B cell (primary cell): ENCODE measurements at regions of chr19 and their contacts with region 1.

Region 1: GRCh38 chr19:56080669-56081401 is 40.3 kb downstream of the ZNF787 start:
- DNase-seq: peak; percentile 88
- ATAC-seq: peak; percentile 78
- H3K4me3 ChIP-seq: peak overlapping the region; percentile 13 to 74 (median 45)
- H3K4me3 Mint-ChIP-seq: peak overlapping the region; percentile 95
- H3K27ac ChIP-seq: no peak overlapping the region
- H3K27ac Mint-ChIP-seq: peak overlapping the region; percentile 75
- H3K4me1 ChIP-seq: peaks cover 12 to 16% of the 10 kb centered on the region in 2 donors
- H3K4me1 Mint-ChIP-seq: peaks cover 12% of the 10 kb centered on the region
- H3K27me3 ChIP-seq: no peaks in the 10 kb centered on the region
- H3K27me3 Mint-ChIP-seq: no peaks in the 10 kb centered on the region
- CTCF ChIP-seq: peak; percentile 70

Region 2: DNA sequence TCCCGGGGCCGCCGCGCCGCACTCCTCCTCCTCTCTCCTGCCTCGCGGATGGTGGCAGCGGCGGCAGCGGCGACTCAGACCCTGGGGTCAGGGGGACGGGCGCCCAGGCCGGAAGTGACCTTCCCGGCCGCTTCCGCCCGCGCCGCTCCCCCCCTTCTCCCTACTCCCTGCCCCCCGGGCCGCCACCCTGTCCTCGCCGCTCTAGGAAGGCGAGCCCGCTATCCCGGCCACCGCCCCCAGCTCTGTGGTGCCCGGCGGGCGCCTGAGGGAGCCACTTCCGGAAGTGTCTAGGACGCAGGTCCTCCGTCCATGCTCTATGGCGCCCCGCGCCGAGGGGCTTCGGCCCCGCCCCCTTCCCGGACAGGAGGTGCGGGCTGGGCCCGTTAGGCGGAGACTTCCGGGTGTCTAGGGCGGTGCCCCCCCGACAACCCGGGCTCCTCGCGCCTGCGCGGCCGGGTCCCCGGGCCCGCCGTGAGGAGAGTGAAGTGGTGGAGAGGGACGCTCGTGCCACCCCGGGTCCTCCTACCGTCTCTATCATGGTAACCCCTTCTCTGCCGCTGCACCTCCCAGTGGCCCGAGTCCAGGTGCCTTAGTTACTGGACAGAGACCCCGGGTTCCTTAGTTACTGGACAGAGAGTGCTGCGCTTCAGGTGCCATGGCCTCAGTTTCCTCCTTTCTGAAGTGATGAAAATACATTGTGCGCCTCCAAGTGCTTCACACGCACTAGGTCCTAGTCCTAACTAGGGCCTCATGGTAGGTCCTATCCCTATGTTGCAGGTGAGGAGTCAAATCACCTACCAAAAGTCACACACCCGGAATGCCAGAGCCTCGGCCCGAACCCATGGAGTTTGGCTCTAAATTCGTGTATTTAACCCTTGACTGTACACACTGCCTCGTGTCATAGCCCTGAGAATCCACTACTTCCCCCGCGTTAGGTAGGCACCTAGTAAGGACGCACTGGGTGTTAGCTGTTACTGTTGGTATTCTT is 40.6 kb after region 1 on chr19 and contains the start of gene ZNF787:
- CTCF ChIA-PET with region 1: interaction called, 4 read pairs
- POLR2A ChIA-PET with region 1: no interaction called
- intact Hi-C with region 1: loop called (anchors 1 kb)
- DNase-seq: peak; percentile 98
- ATAC-seq: peak; percentile 83
- H3K4me3 ChIP-seq: peak within 1 kb of the TSS; percentile 37 to 95 (median 76)
- H3K4me3 Mint-ChIP-seq: peak within 1 kb of the TSS; percentile 94
- H3K27ac ChIP-seq: peak within 1 kb of the TSS; percentile 91 to 99
- H3K27ac Mint-ChIP-seq: peak within 1 kb of the TSS; percentile 99
- H3K4me1 ChIP-seq: peaks cover 18 to 29% of the 10 kb centered on the region in 2 donors
- H3K4me1 Mint-ChIP-seq: peaks cover 40% of the 10 kb centered on the region
- H3K27me3 ChIP-seq: no peaks in the 10 kb centered on the region
- H3K27me3 Mint-ChIP-seq: no peaks in the 10 kb centered on the region
- CTCF ChIP-seq: no peak
- total RNA-seq, gene ZNF787: 47.7 and 47.9 TPM in 2 replicates

Region 3: GRCh38 chr19:56252699-56253422 is 172.0 kb after region 1 on chr19:
- CTCF ChIA-PET with region 1: interaction called, 14 read pairs
- POLR2A ChIA-PET with region 1: no interaction called
- intact Hi-C with region 1: loop called (anchors 1 kb)
- DNase-seq: peak; percentile 76
- ATAC-seq: peak; percentile 76
- H3K4me3 ChIP-seq: no peak overlapping the region
- H3K4me3 Mint-ChIP-seq: no peak overlapping the region
- H3K27ac ChIP-seq: no peak overlapping the region
- H3K27ac Mint-ChIP-seq: peak overlapping the region; percentile 63
- H3K4me1 ChIP-seq: peaks cover 0 to 2% of the 10 kb centered on the region in 2 donors
- H3K4me1 Mint-ChIP-seq: no peaks in the 10 kb centered on the region
- H3K27me3 ChIP-seq: no peaks in the 10 kb centered on the region
- H3K27me3 Mint-ChIP-seq: no peaks in the 10 kb centered on the region
- CTCF ChIP-seq: peak; percentile 73

Region 4: DNA sequence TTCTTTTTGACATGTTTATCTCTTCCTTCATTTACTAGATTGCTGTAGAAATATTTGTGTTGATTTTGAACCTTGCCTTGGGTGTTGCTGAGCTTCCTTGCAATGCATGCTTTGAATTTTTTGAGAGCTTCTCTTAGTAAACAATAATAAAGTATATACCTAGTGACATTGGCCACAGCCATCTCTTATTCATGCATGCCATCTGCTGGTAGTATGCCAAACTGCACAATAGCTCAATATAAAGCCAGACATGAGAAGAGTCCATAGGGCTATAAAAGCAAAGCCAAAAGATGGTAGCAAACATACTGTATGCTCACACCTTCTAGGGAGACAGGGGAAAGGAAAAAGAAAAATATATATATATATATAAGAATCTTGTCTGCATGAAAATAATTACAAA is 252.7 kb after region 1 on chr19:
- CTCF ChIA-PET with region 1: interaction called, 58 read pairs
- POLR2A ChIA-PET with region 1: no interaction called
- intact Hi-C with region 1: loop called (anchors 1 kb)
- DNase-seq: peak; percentile 68
- ATAC-seq: peak; percentile 60
- H3K4me3 ChIP-seq: no peak overlapping the region
- H3K4me3 Mint-ChIP-seq: no peak overlapping the region
- H3K27ac ChIP-seq: no peak overlapping the region
- H3K27ac Mint-ChIP-seq: no peak overlapping the region
- H3K4me1 ChIP-seq: no peaks in the 10 kb centered on the region
- H3K4me1 Mint-ChIP-seq: no peaks in the 10 kb centered on the region
- H3K27me3 ChIP-seq: no peaks in the 10 kb centered on the region
- H3K27me3 Mint-ChIP-seq: peaks cover 26% of the 10 kb centered on the region
- CTCF ChIP-seq: peak; percentile 84